ENCODE measurements at regions of chr7 and their contacts with region 1.

Region 1: GRCh38 chr7:105759670-105760550 is 116.5 kb downstream of the ATXN7L1 start:
- DNase-seq: peak; percentile 53
- H3K4me3 ChIP-seq: no peak overlapping the region
- H3K27ac ChIP-seq: peak overlapping the region; percentile 20 to 44
- H3K4me1 ChIP-seq: peaks cover 16 to 20% of the 10 kb centered on the region in 2 experiments
- H3K27me3 ChIP-seq: no peaks in the 10 kb centered on the region
- CTCF ChIP-seq: peak; percentile 97
- EP300 ChIP-seq: peak in 1 of 2 experiments; percentile 53; a peak in 2 of 4 replicates
- RAD21 ChIP-seq: peak; percentile 96

Region 2: DNA sequence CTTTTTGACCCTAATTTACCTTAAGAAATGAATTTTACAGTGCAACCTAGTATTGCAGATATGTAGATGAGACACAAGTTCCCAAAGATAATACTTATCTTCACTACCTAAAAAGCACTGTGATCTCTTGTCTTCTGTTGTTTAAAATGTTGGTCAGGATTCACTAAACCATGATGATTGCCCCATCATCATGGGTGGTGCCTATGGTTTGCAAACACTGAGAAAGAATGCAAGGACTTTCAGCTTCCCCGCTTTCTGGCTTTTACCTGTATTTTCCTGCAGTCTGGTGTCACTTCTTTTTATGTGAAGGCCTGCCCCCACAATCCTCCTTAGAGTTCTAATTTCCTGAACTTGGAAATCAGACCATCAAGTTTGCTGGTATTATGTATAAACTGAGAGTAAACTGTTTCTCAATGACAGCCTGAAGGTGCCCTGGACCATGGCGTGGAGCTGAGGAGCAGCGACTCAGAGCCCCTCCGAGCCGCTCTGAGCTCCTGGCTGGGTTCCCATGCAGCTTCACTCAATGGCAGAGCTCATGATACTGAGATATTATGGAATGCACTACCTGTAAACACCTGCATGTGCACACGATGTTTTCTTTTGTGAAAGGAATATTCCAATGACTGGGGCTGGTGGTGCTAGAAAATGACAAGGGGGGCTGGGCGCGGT is 60.2 kb before region 1 on chr7:
- CTCF ChIA-PET with region 1: no interaction called
- POLR2A ChIA-PET with region 1: no interaction called
- DNase-seq: no peak
- H3K4me3 ChIP-seq: no peak overlapping the region
- H3K27ac ChIP-seq: no peak overlapping the region
- H3K4me1 ChIP-seq: no peaks in the 10 kb centered on the region
- H3K27me3 ChIP-seq: no peaks in the 10 kb centered on the region
- CTCF ChIP-seq: no peak
- EP300 ChIP-seq: no peak
- RAD21 ChIP-seq: no peak

Region 3: DNA sequence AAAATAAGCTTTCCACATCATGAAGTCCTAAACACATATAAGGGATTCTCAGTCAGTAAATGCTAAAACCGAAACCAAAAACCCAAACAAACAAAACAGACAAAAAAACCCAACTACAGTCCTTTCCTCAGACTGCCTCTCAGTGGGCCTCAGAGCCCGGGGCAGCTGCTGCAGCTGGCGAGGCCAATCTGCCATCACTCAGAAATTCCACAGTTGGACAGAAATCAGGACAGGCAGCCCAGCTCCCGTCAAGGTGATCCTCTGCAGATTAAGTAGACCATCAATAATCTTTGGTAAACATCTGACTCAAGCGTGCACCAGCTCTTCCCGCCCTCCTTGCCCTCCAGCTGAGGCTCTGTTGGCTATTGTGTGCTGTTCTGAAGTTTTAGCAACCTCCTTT is 25.7 kb before region 1 on chr7:
- CTCF ChIA-PET with region 1: interaction called, 29 read pairs
- POLR2A ChIA-PET with region 1: no interaction called
- DNase-seq: no peak
- H3K4me3 ChIP-seq: no peak overlapping the region
- H3K27ac ChIP-seq: no peak overlapping the region
- H3K4me1 ChIP-seq: peaks cover 0 to 10% of the 10 kb centered on the region in 2 experiments; a peak in 1 of 4 replicates
- H3K27me3 ChIP-seq: no peaks in the 10 kb centered on the region
- CTCF ChIP-seq: no peak
- EP300 ChIP-seq: no peak
- RAD21 ChIP-seq: no peak

Region 4: DNA sequence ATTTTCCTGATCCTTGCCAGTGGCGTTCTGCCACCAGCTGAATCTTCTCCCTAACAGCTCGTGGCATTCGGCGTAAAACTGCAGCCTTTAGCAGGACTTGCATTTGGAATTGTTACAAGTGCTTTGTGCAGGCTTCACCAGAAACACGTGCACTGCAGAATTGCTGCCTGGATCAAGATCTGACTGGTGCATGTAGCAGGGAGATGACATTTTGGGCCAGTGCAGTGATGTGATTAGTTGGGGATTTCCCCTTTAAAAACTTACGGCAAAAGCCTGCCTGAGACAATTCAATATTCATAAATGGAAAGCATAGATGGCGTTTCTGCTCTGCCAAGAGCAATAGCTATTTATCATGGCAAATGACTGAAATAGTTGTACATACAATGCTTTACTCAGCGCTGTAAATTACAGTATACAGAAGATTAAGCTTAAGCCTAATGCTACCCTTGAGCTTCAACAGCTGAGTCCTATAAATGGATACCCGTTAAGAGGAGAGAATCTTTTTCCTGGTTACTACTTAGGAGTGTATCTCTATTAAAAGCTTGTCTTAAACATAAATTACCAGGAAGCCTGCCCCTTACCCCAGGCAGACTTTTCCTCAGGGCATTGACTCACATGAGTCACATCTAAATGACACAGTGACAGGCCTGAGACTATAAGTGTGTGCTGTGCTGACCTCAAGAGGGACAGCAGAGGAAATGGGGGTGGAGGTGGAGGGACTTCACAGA is 10.2 kb after region 1 on chr7:
- CTCF ChIA-PET with region 1: interaction called, 27 read pairs
- POLR2A ChIA-PET with region 1: no interaction called
- DNase-seq: peak; percentile 37
- H3K4me3 ChIP-seq: no peak overlapping the region
- H3K27ac ChIP-seq: peak overlapping the region; percentile 49 to 72; a peak in 3 of 4 replicates
- H3K4me1 ChIP-seq: peaks cover 25 to 35% of the 10 kb centered on the region in 2 experiments
- H3K27me3 ChIP-seq: no peaks in the 10 kb centered on the region
- CTCF ChIP-seq: no peak
- EP300 ChIP-seq: peak; percentile 50 to 61; a peak in 1 of 4 replicates
- RAD21 ChIP-seq: no peak; the same call in none of the 2 replicates

Region 5: DNA sequence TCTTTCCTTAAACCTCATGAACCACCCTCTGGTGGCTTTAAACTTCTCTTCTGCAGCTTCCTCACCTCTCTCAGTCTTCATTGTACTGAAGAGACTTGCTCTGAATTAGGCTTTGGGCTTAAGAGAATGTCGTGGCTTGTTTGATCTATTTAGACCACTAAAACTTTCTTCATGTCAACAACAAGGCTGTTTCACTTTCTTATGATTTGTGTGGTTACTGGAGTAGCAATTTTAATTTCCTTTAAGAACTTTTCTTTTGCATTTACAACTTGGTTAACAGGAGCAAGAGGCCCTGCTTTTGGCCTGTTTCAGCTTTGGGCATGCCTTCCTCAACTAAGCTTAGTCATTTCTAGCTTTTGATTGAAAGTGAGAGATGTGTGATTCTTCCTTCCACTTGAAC is 165.0 kb after region 1 on chr7:
- CTCF ChIA-PET with region 1: interaction called, 10 read pairs
- POLR2A ChIA-PET with region 1: no interaction called
- DNase-seq: no peak
- H3K4me3 ChIP-seq: no peak overlapping the region
- H3K27ac ChIP-seq: no peak overlapping the region
- H3K4me1 ChIP-seq: peaks cover 0 to 7% of the 10 kb centered on the region in 2 experiments; a peak in 1 of 4 replicates
- H3K27me3 ChIP-seq: no peaks in the 10 kb centered on the region
- CTCF ChIP-seq: no peak
- EP300 ChIP-seq: no peak
- RAD21 ChIP-seq: no peak

Region 6: GRCh38 chr7:106056513-106057203 is 296.7 kb after region 1 on chr7:
- CTCF ChIA-PET with region 1: interaction called, 14 read pairs
- POLR2A ChIA-PET with region 1: no interaction called
- DNase-seq: peak; percentile 88
- H3K4me3 ChIP-seq: no peak overlapping the region
- H3K27ac ChIP-seq: peak overlapping the region in 1 of 2 experiments; percentile 96; a peak in 2 of 4 replicates
- H3K4me1 ChIP-seq: peaks cover 0 to 28% of the 10 kb centered on the region in 2 experiments; a peak in 2 of 4 replicates
- H3K27me3 ChIP-seq: no peaks in the 10 kb centered on the region
- CTCF ChIP-seq: peak; percentile 95
- EP300 ChIP-seq: 0 out of 4 replicates have a peak, but pooled peaks of 1 of the 2 experiments have one; percentile 26
- RAD21 ChIP-seq: peak; percentile 100

Measured in SK-N-SH (cell line).